BJ (cell line): ENCODE measurements at regions of chr19 and their contacts with region 1.

Region 1: GRCh38 chr19:32464279-32464678 is 58.7 kb downstream of the DPY19L3 start:
- DNase-seq: no peak
- H3K4me3 ChIP-seq: no peak overlapping the region
- H3K27me3 ChIP-seq: no peaks in the 10 kb centered on the region
- CTCF ChIP-seq: peak; percentile 23; the same call in 1 of the 2 replicates

Region 2: GRCh38 chr19:32309711-32310390 is 154.4 kb before region 1 on chr19:
- CTCF ChIA-PET with region 1: no interaction called
- POLR2A ChIA-PET with region 1: no interaction called
- DNase-seq: no peak
- H3K4me3 ChIP-seq: no peak overlapping the region
- H3K27me3 ChIP-seq: peaks cover 3% of the 10 kb centered on the region; the same call in 1 of the 2 replicates
- CTCF ChIP-seq: no peak

Region 3: GRCh38 chr19:32387701-32388392 is 76.4 kb before region 1 on chr19:
- CTCF ChIA-PET with region 1: no interaction called
- POLR2A ChIA-PET with region 1: no interaction called
- DNase-seq: no peak
- H3K4me3 ChIP-seq: no peak overlapping the region
- H3K27me3 ChIP-seq: no peaks in the 10 kb centered on the region
- CTCF ChIP-seq: no peak

Region 4: DNA sequence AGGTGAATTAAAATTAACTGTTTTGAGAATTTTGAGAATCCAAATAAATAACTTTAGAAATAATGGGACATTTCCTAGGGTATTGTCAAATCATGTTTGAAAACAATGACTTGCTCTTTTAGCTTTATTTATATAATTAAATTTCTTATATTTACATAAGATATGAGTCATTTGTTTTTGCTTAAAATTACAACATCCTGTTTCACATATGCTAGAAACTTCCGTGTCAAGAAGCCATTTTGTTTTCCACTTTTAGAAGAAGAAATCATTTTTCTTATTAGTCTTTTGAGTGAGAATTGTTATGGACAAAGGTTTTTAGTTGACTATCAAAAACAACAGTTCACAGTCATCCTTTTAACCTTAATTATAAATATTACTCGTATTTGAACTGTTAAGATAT is 10.5 kb before region 1 on chr19:
- CTCF ChIA-PET with region 1: interaction called, 19 read pairs
- POLR2A ChIA-PET with region 1: no interaction called
- DNase-seq: no peak
- H3K4me3 ChIP-seq: no peak overlapping the region
- H3K27me3 ChIP-seq: no peaks in the 10 kb centered on the region
- CTCF ChIP-seq: no peak

Region 5: DNA sequence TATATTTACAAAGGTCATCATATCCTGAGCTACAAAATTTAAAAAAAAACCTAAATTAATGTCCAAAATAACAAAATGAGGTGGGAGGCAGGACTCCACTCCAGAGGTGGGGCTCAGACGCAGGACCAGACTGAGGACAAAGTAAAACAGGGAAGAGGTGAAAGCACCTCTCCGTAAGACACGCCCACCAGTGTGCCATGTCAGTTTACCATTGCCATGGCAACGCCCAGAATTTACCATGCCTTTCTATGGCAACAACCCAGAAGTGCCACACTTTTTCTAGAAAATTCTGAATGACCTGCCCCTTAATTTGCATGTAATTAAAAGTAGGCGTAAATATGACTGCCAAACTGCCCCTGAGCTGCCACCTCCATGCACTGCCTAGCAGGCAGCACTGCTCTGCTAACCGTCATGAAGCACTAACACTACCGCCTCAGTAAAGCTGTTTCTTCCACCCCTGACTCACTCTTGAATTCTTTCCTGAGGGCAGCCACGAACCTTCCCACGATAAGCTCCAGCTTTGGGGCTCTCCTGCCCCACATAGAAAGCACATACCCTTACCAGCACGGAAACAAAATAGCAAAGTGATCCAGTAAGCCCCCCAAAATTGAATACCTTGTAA is 94.4 kb after region 1 on chr19:
- CTCF ChIA-PET with region 1: no interaction called
- POLR2A ChIA-PET with region 1: no interaction called
- DNase-seq: no peak
- H3K4me3 ChIP-seq: no peak overlapping the region
- H3K27me3 ChIP-seq: no peaks in the 10 kb centered on the region
- CTCF ChIP-seq: no peak